ENCODE measurements at regions of chr14 and their contacts with region 1.

Region 1: GRCh38 chr14:49560374-49560768 is 25.8 kb downstream of the RPS29 start:
- DNase-seq: no peak
- H3K4me3 ChIP-seq: no peak overlapping the region
- H3K4me3 Mint-ChIP-seq: no peak overlapping the region
- H3K27ac ChIP-seq: no peak overlapping the region
- H3K27ac Mint-ChIP-seq: no peak overlapping the region
- H3K4me1 ChIP-seq: no peaks in the 10 kb centered on the region
- H3K4me1 Mint-ChIP-seq: no peaks in the 10 kb centered on the region
- H3K27me3 ChIP-seq: no peaks in the 10 kb centered on the region
- H3K27me3 Mint-ChIP-seq: peaks cover 1 to 8% of the 10 kb centered on the region in 2 donors

Region 2: GRCh38 chr14:49578141-49578540 is 17.8 kb after region 1 on chr14:
- CTCF ChIA-PET with region 1: no interaction called
- POLR2A ChIA-PET with region 1: interaction called, 10 read pairs
- DNase-seq: no peak
- H3K4me3 ChIP-seq: no peak overlapping the region
- H3K4me3 Mint-ChIP-seq: no peak overlapping the region
- H3K27ac ChIP-seq: no peak overlapping the region
- H3K27ac Mint-ChIP-seq: peak overlapping the region in 5 of 8 donors; percentile 2 to 72 (median 41)
- H3K4me1 ChIP-seq: peaks cover 21% of the 10 kb centered on the region
- H3K4me1 Mint-ChIP-seq: peaks cover 37 to 50% (median 42%) of the 10 kb centered on the region in 3 donors
- H3K27me3 ChIP-seq: no peaks in the 10 kb centered on the region
- H3K27me3 Mint-ChIP-seq: no peaks in the 10 kb centered on the region